Ovary (tissue), 10 donors: ENCODE measurements at regions of chr12 and their contacts with region 1.

Region 1: GRCh38 chr12:105644770-105645169 is 314.3 kb downstream of the C12orf75 start:
- DNase-seq: no peak
- H3K4me3 ChIP-seq: no peak overlapping the region
- H3K27ac ChIP-seq: no peak overlapping the region
- H3K4me1 ChIP-seq: no peaks in the 10 kb centered on the region
- H3K27me3 ChIP-seq: no peaks in the 10 kb centered on the region
- CTCF ChIP-seq: no peak
- EP300 ChIP-seq: no peak
- POLR2A ChIP-seq: no peak

Region 2: DNA sequence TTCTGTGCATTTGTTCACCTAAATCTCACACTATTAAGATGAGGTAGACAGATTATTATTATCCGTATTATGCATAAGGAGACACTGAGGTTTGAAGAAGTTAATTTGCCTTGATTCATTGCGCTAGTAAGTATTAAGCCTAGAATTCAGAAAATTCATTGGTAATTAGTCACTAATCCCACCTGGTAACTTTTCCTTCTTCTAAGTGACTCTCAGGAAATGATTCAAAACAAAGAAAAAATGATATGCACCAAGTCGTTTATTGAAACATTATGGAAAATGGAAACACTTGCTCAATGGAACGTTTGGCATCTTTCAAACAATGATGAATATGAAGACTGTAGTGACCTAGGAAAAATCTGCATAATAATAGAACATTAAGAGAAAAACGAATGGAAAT is 953.2 kb after region 1 on chr12:
- intact Hi-C with region 1: loop called in 1 of 4 experiments (anchors 5 kb)
- DNase-seq: no peak
- H3K4me3 ChIP-seq: no peak overlapping the region
- H3K27ac ChIP-seq: no peak overlapping the region
- H3K4me1 ChIP-seq: no peaks in the 10 kb centered on the region
- H3K27me3 ChIP-seq: no peaks in the 10 kb centered on the region
- CTCF ChIP-seq: no peak
- EP300 ChIP-seq: no peak
- POLR2A ChIP-seq: no peak